Posterior cingulate gyrus (tissue), 11 donors: ENCODE measurements at regions of chr20 and their contacts with region 1.

Region 1: DNA sequence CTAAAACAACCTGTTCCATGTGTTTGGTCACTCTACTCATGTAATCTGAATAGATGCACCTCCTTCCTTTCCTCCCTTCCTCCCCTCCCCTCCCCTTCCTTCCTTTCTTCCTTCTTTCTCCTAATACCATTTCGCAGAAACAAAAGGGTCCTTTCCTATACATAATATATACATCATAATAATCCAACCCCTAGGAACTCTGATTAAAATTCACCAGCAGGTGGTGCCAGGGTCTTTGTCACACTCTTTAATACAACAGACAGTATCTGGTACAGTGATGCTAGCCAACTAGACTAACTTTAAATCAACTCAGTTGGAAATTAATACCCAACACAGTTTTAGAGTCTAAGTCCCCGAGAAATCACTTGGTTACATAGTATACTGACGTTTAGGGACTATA is 181.2 kb upstream of the SHLD1 start:
- DNase-seq: peak in 3 of 10 donors; percentile 23 to 35 (median 30)

Region 2: GRCh38 chr20:4944518-4945313 is 624.3 kb before region 1 on chr20:
- intact Hi-C with region 1: no loop called
- DNase-seq: no peak

Region 3: GRCh38 chr20:5364136-5364821 is 204.7 kb before region 1 on chr20:
- intact Hi-C with region 1: no loop called
- DNase-seq: no peak

Region 4: GRCh38 chr20:5524626-5525295 is 44.3 kb before region 1 on chr20:
- intact Hi-C with region 1: no loop called
- DNase-seq: no peak

Region 5: DNA sequence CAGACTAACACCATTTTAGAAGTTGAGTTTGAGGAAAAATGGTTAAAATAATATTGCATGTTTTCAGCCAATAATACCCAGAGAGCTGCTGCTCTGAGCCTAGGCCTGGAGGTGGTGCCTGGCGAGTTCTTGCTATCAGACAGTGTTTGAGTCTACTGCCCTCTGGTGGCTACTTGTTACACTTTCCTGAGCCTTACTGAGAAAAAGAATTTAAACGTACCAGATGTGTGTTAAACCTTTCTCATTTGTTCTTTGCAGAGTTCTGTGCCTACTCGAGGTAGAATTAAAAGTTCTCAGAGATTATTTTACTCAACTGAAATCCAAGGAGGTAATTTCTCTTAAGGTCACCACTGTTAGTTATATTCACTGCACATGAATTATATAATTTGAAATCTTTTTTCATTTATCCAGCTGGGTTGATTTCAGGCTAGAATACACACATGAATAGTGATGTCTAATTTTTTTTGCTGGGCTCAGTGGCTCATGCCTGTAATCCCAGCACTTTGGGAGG is 219.4 kb after region 1 on chr20:
- intact Hi-C with region 1: loop called (anchors 1 kb)
- DNase-seq: peak in 9 of 10 donors; percentile 23 to 94 (median 72)